Activated CD4-positive, alpha-beta T cell treated with anti-CD3 and anti-CD28 coated beads for 36 hours (primary cell): ENCODE measurements at regions of chr7 and their contacts with region 1.

Region 1: DNA sequence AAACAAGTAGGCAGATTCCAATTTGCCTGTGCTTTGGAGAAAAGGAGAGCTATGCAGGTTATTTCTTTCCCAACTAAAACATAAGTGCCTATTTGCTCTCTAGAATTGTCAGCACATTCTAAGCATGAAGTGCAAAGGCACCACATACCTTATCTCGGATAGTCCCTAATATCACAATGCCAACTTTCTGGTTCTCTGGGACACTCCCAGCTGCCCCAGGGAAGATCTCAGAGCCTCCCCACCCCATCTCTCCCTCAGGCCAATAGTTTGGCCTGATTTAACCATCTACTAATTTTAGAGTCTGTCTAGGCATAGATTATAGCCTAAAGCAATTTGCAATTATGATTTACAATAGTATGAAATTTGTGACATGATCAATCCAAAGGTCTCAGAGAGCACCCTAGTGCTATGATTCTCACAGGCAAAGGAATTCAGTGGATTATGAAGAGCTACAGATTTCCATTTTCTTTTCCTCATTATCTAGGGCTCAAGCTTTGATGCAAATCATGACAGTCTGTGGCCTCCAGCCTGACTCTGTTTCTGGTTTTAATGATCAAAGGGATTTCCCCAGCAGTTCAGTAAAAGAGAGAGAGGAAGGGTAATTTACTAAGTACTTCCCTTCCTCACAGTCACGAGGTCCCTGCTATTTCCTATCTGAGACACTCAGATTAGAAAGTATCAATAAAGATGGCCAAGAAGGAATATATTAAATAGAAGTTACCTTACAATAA is 29.0 kb upstream of the IL6 start:
- DNase-seq: peak; percentile 42
- ATAC-seq: peak; percentile 72
- H3K4me3 Mint-ChIP-seq: no peak overlapping the region
- H3K27ac Mint-ChIP-seq: peak overlapping the region; percentile 86
- H3K4me1 Mint-ChIP-seq: peaks cover 63% of the 10 kb centered on the region
- H3K27me3 Mint-ChIP-seq: peaks cover 3% of the 10 kb centered on the region

Region 2: GRCh38 chr7:22586786-22587140 is 111.3 kb before region 1 on chr7:
- CTCF ChIA-PET with region 1: no interaction called
- POLR2A ChIA-PET with region 1: no interaction called
- intact Hi-C with region 1: loop called in 1 of 2 experiments (anchors 1 kb)
- DNase-seq: no peak
- ATAC-seq: peak; percentile 42
- H3K4me3 Mint-ChIP-seq: no peak overlapping the region
- H3K27ac Mint-ChIP-seq: no peak overlapping the region
- H3K4me1 Mint-ChIP-seq: peaks cover 15% of the 10 kb centered on the region
- H3K27me3 Mint-ChIP-seq: peaks cover 26% of the 10 kb centered on the region